B cell (primary cell): ENCODE measurements at regions of chr19 and their contacts with region 1.

Region 1: GRCh38 chr19:20077791-20078463 is at the start of gene ZNF90:
- DNase-seq: peak; percentile 93
- ATAC-seq: peak; percentile 99
- H3K4me3 ChIP-seq: peak within 1 kb of the TSS; percentile 60 to 78 (median 68)
- H3K4me3 Mint-ChIP-seq: peak within 1 kb of the TSS; percentile 95
- H3K27ac ChIP-seq: peak within 1 kb of the TSS in 1 of 2 donors; percentile 9
- H3K27ac Mint-ChIP-seq: peak within 1 kb of the TSS; percentile 79
- H3K4me1 ChIP-seq: peaks cover 10 to 14% of the 10 kb centered on the region in 2 donors
- H3K4me1 Mint-ChIP-seq: peaks cover 25% of the 10 kb centered on the region
- H3K27me3 ChIP-seq: no peaks in the 10 kb centered on the region
- H3K27me3 Mint-ChIP-seq: no peaks in the 10 kb centered on the region
- CTCF ChIP-seq: no peak
- total RNA-seq, gene ZNF90: 14.6 and 15.8 TPM in 2 replicates

Region 2: DNA sequence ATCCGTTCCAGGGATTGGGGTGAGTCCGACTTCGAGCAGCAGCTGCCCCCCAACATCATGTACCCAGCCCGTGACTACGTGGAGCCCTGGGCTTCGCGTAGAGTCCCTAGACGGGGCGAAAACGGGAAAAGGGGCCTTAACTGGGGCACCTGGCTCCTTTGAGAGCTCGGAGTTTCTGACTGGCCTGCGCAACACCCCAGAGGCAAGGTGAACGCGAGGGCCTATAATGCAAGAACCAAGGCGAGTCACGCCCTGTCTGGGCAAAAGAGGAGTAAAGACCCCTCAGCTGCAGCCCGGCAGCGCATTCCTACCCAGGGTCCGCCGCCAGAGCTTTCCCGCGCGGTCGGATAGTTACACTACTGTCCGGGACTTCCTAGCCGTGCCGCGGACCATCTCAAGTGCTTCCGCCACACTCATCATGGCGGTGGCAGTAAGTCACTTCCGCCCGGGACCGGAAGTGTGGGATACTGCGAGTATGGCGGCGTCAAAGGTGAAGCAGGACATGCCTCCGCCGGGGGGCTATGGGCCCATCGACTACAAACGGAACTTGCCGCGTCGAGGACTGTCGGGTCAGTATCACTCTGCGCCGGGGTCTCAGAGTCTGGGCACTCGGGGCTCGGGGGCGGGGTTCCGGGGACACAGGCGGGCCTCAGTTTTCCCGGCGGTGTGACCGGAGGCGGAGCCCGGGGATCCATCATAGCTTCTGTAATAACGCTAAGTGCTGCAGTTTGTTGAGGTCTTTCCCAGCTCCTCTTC is 562.0 kb before region 1 on chr19 and contains the start of gene NDUFA13:
- CTCF ChIA-PET with region 1: no interaction called
- POLR2A ChIA-PET with region 1: no interaction called
- intact Hi-C with region 1: loop called (anchors 10 kb)
- DNase-seq: peak; percentile 96
- ATAC-seq: peak; percentile 94
- H3K4me3 ChIP-seq: peak within 1 kb of the TSS; percentile 82 to 99 (median 95)
- H3K4me3 Mint-ChIP-seq: peak within 1 kb of the TSS; percentile 93
- H3K27ac ChIP-seq: peak within 1 kb of the TSS; percentile 72 to 81
- H3K27ac Mint-ChIP-seq: peak within 1 kb of the TSS; percentile 92
- H3K4me1 ChIP-seq: peaks cover 12 to 23% of the 10 kb centered on the region in 2 donors
- H3K4me1 Mint-ChIP-seq: peaks cover 27% of the 10 kb centered on the region
- H3K27me3 ChIP-seq: no peaks in the 10 kb centered on the region
- H3K27me3 Mint-ChIP-seq: no peaks in the 10 kb centered on the region
- CTCF ChIP-seq: no peak
- total RNA-seq, gene NDUFA13: 170 and 188 TPM in 2 replicates

Region 3: DNA sequence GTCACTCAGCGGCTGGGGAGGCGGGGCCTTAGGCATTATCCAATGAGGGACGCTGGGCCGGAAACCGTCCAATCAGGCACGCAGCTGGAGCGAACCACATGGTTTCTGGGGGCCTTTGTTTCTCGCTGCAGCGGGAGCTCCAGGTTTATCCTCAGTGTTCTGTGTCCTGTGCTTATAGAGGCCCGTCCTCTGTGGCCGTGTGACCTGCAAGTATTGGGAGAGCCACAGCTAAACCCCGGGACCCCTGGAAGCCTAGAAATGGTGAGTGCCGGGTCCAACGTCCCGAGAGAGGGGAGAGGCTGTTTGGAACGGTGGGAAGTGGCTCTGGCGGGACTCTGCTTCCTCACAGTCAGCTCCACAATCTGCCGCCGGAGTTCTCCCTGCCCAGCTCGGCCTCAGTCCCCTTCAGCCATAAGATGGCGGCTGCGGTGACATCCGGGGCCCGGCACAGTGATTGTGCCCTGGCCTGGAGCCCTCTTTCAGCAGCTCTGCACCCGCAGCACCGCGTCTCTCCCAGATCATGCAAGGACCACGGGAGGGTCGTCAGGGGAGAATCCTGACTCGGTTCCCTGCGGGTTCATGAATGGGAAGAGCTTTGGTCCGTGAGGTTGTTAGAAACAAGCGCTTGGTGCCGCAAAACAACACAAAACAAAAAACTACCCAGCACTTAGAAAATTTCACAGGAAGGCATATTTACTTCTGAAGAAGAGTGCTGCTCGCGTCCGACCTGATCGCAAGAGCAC is 212.0 kb before region 1 on chr19 and contains the start of gene ZNF253:
- CTCF ChIA-PET with region 1: no interaction called
- POLR2A ChIA-PET with region 1: no interaction called
- intact Hi-C with region 1: loop called (anchors 1 kb)
- DNase-seq: peak; percentile 94
- ATAC-seq: peak; percentile 87
- H3K4me3 ChIP-seq: peak within 1 kb of the TSS; percentile 78 to 97 (median 93)
- H3K4me3 Mint-ChIP-seq: peak within 1 kb of the TSS; percentile 100
- H3K27ac ChIP-seq: peak within 1 kb of the TSS; percentile 88 to 91
- H3K27ac Mint-ChIP-seq: peak within 1 kb of the TSS; percentile 98
- H3K4me1 ChIP-seq: peaks cover 15 to 19% of the 10 kb centered on the region in 2 donors
- H3K4me1 Mint-ChIP-seq: peaks cover 35% of the 10 kb centered on the region
- H3K27me3 ChIP-seq: no peaks in the 10 kb centered on the region
- H3K27me3 Mint-ChIP-seq: no peaks in the 10 kb centered on the region
- CTCF ChIP-seq: no peak
- total RNA-seq, gene ZNF253: 28.6 and 33.7 TPM in 2 replicates

Region 4: DNA sequence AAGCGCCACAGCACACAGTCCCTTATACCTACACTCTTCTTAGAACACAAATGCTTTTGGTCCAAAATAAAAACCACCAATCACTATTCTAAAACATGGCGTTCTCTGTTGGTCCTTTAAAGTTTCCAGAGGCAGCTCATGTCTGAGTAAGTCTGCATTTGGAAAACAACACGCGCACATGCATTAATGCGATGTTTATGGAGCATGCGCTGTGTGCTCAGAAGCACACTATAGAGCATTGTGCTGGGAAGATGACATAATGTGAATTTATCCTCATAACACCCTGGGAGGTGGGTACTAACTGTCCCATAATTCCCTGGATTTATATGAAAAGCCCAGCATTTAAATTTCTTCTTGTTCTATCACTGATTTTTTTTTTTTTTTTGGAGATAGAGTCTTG is 49.3 kb before region 1 on chr19:
- CTCF ChIA-PET with region 1: no interaction called
- POLR2A ChIA-PET with region 1: no interaction called
- intact Hi-C with region 1: no loop called
- DNase-seq: no peak
- ATAC-seq: no peak
- H3K4me3 ChIP-seq: no peak overlapping the region
- H3K4me3 Mint-ChIP-seq: no peak overlapping the region
- H3K27ac ChIP-seq: no peak overlapping the region
- H3K27ac Mint-ChIP-seq: no peak overlapping the region
- H3K4me1 ChIP-seq: no peaks in the 10 kb centered on the region
- H3K4me1 Mint-ChIP-seq: no peaks in the 10 kb centered on the region
- H3K27me3 ChIP-seq: no peaks in the 10 kb centered on the region
- H3K27me3 Mint-ChIP-seq: no peaks in the 10 kb centered on the region
- CTCF ChIP-seq: no peak

Region 5: GRCh38 chr19:20051841-20052768 is 25.8 kb before region 1 on chr19:
- CTCF ChIA-PET with region 1: interaction called, 5 read pairs
- POLR2A ChIA-PET with region 1: interaction called, 7 read pairs
- intact Hi-C with region 1: loop called (anchors 2 kb)
- DNase-seq: peak; percentile 77
- ATAC-seq: peak; percentile 95
- H3K4me3 ChIP-seq: peak overlapping the region; percentile 75 to 90 (median 84)
- H3K4me3 Mint-ChIP-seq: peak overlapping the region; percentile 98
- H3K27ac ChIP-seq: peak overlapping the region; percentile 63 to 77
- H3K27ac Mint-ChIP-seq: peak overlapping the region; percentile 94
- H3K4me1 ChIP-seq: peaks cover 4 to 13% of the 10 kb centered on the region in 2 donors
- H3K4me1 Mint-ChIP-seq: peaks cover 14% of the 10 kb centered on the region
- H3K27me3 ChIP-seq: no peaks in the 10 kb centered on the region
- H3K27me3 Mint-ChIP-seq: no peaks in the 10 kb centered on the region
- CTCF ChIP-seq: no peak

Region 6: GRCh38 chr19:20167020-20167644 is 89.2 kb after region 1 on chr19 and contains the start of gene ZNF486:
- CTCF ChIA-PET with region 1: no interaction called
- POLR2A ChIA-PET with region 1: interaction called, 9 read pairs
- intact Hi-C with region 1: loop called (anchors 1 kb)
- DNase-seq: peak; percentile 95
- ATAC-seq: peak; percentile 98
- H3K4me3 ChIP-seq: peak within 1 kb of the TSS; percentile 54 to 99 (median 73)
- H3K4me3 Mint-ChIP-seq: peak within 1 kb of the TSS; percentile 100
- H3K27ac ChIP-seq: peak within 1 kb of the TSS; percentile 65 to 78
- H3K27ac Mint-ChIP-seq: peak within 1 kb of the TSS; percentile 97
- H3K4me1 ChIP-seq: peaks cover 17 to 25% of the 10 kb centered on the region in 2 donors
- H3K4me1 Mint-ChIP-seq: peaks cover 56% of the 10 kb centered on the region
- H3K27me3 ChIP-seq: no peaks in the 10 kb centered on the region
- H3K27me3 Mint-ChIP-seq: no peaks in the 10 kb centered on the region
- CTCF ChIP-seq: no peak
- total RNA-seq, gene ZNF486: 16.6 and 18.3 TPM in 2 replicates

Region 7: GRCh38 chr19:20237761-20238623 is 160.1 kb after region 1 on chr19:
- CTCF ChIA-PET with region 1: interaction called, 4 read pairs
- POLR2A ChIA-PET with region 1: no interaction called
- intact Hi-C with region 1: loop called (anchors 2 kb)
- DNase-seq: peak; percentile 91
- ATAC-seq: peak; percentile 85
- H3K4me3 ChIP-seq: peak overlapping the region; percentile 58 to 89 (median 82)
- H3K4me3 Mint-ChIP-seq: peak overlapping the region; percentile 100
- H3K27ac ChIP-seq: peak overlapping the region; percentile 22 to 73
- H3K27ac Mint-ChIP-seq: peak overlapping the region; percentile 87
- H3K4me1 ChIP-seq: peaks cover 3 to 22% of the 10 kb centered on the region in 2 donors
- H3K4me1 Mint-ChIP-seq: peaks cover 29% of the 10 kb centered on the region
- H3K27me3 ChIP-seq: no peaks in the 10 kb centered on the region
- H3K27me3 Mint-ChIP-seq: no peaks in the 10 kb centered on the region
- CTCF ChIP-seq: no peak

Region 8: DNA sequence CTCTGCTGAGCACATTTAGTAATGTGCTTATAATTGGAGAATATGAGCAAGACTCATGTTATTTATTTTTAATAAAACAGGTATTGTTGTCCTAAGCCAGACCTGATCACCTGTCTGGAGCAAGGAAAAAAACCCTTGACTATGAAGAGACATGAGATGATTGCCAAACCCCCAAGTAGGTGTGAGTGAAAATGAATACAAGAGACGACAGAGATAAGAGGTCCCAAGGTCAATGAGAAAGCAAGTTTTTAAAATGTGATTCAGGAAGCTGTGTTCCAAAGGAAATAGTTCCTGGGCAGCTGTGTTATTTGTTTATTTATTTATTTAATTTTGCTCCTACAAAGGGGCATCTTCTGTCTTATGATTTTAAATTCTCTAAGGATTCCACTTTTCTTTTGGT is 172.2 kb after region 1 on chr19:
- CTCF ChIA-PET with region 1: no interaction called
- POLR2A ChIA-PET with region 1: no interaction called
- intact Hi-C with region 1: no loop called
- DNase-seq: no peak
- ATAC-seq: no peak
- H3K4me3 ChIP-seq: no peak overlapping the region
- H3K4me3 Mint-ChIP-seq: no peak overlapping the region
- H3K27ac ChIP-seq: no peak overlapping the region
- H3K27ac Mint-ChIP-seq: no peak overlapping the region
- H3K4me1 ChIP-seq: no peaks in the 10 kb centered on the region
- H3K4me1 Mint-ChIP-seq: no peaks in the 10 kb centered on the region
- H3K27me3 ChIP-seq: no peaks in the 10 kb centered on the region
- H3K27me3 Mint-ChIP-seq: no peaks in the 10 kb centered on the region
- CTCF ChIP-seq: no peak